ENCODE measurements at regions of chr11 and their contacts with region 1.

Region 1: GRCh38 chr11:107689317-107690202 is 22.3 kb downstream of the SLN start:
- DNase-seq: peak; percentile 53 to 76
- ATAC-seq: peak; percentile 78 to 96 (median 86)
- H3K4me3 ChIP-seq: peak overlapping the region; percentile 48
- H3K27ac ChIP-seq: no peak overlapping the region
- H3K4me1 ChIP-seq: no peaks in the 10 kb centered on the region
- H3K27me3 ChIP-seq: no peaks in the 10 kb centered on the region
- CTCF ChIP-seq: peak; percentile 72

Region 2: DNA sequence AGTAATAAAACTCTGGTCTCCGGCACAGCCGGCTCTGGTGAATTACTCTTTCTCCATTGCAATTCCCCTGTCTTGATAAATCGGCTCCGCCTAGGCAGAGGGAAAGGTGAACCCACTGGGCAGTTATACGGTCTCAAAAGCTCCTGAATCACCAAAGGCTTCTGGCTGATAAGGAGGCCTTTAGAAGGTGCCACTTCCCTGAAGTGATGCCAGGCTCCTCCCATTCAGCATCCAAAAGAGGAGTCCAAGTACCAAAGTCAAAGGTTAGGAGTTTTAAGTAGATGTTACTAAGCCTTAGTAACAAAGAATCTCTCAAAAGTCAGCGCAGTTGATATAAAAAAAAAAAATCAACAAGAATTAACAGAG is 112.2 kb before region 1 on chr11:
- intact Hi-C with region 1: loop called (anchors 2 to 5 kb)
- DNase-seq: no peak
- ATAC-seq: no peak
- H3K4me3 ChIP-seq: no peak overlapping the region
- H3K27ac ChIP-seq: no peak overlapping the region
- H3K4me1 ChIP-seq: no peaks in the 10 kb centered on the region
- H3K27me3 ChIP-seq: no peaks in the 10 kb centered on the region
- CTCF ChIP-seq: no peak

Measured in psoas muscle (tissue), 8 donors.